Posterior cingulate gyrus (tissue), 11 donors: ENCODE measurements at regions of chr16 and their contacts with region 1.

Region 1: DNA sequence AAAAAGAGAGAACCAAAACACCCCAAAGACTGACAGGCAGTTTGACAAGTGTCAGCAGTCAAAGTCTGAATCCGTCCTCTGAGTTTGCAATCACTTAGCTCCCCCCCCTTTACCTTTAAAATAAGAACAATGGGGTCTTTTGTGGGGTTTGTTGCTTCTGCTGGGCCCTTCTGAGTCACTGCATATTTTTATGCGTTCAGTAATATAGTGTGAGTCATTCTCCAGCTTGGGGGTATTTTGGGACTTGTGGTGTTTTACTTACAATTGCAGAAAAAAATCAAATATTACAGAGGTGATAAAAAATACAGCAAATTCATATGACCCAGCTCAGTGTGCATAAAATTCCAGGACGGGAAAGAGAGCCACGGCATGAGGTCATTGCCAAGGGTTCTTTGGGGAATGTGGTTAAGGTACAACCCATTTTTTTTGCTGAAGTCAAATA is 120.1 kb downstream of the CYLD start:
- DNase-seq: no peak

Region 2: GRCh38 chr16:50809561-50809960 is 52.4 kb before region 1 on chr16:
- intact Hi-C with region 1: no loop called
- DNase-seq: no peak

Region 3: DNA sequence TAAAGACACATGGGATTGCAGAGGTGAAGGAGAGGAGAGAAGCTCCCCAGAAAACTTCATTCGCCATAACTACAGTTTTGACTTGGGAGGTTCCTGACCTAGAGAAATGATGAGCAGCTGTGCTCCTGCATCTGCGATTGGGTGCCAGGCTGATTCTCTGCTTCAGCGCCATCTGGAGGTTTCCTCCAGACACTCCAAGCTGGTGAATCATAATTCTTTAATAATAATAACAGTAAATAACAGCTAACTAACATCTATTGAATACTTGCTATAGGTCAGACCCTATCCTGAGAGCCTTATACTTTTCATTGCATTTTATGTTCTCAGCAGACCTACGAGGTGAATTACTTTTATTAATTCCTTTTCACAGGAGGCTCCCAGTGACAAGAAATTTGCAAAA is 1109.2 kb after region 1 on chr16:
- intact Hi-C with region 1: loop called (anchors 10 kb)
- DNase-seq: peak in 2 of 10 donors; percentile 23 to 79